ENCODE measurements at regions of chr2 and their contacts with region 1.

Region 1: GRCh38 chr2:86079981-86080911 is 25.4 kb downstream of the POLR1A start:
- DNase-seq: peak; percentile 65
- CTCF ChIP-seq: peak; percentile 90

Region 2: DNA sequence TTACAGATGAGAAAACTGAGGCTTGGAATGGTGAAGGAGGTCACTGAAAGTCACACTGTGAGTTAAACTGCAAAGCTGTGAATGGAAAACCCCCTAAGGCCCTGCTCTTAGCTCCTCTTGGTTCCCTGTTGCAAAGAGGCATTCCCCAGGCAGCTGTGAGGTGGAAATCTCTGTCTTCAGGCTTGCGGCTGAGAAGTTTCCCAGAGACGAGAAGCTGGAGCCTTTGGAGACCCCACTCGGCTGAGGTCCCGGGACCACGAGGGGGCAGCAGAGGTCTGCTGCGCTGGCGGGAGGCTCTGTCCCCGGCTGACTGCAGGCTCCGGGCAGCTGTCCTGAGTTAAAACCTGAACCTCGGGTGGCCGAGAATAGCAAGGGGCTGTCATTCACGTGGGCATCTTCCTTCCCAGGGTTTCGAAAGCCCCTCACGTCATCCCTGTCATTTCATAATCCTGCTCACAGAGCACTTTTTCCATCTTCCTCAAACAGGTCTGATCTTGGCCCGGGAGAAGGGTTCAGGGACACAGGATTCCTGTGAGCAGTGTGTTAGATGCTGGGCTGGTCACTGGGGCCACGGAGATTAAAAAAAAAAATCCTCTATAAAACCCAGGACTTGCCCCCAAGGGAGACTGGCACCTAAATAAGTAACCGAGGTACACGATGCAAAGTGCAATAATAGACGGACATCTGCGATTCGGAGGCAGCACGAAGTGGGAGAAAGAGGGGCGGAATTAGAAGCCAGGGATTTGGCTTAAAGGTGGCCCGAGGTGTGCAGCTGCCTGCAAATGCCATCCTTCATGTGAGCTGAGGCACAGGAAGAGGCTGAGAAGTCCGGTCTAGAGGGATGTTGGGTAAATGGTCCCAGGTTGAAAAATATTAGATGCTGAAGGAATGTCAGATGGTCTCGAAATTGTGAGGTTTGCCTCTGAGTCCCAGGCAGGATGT is 351.1 kb before region 1 on chr2:
- in situ Hi-C with region 1: loop called (anchors 10 kb)
- DNase-seq: peak; percentile 87
- CTCF ChIP-seq: peak; percentile 97

Region 3: GRCh38 chr2:85826990-85827878 is 253.0 kb before region 1 on chr2:
- in situ Hi-C with region 1: loop called (anchors 5 kb)
- DNase-seq: peak; percentile 81
- CTCF ChIP-seq: peak; percentile 93

Measured in GM13977 (cell line).